ENCODE measurements at regions of chr22 and their contacts with region 1.

Region 1: GRCh38 chr22:36156515-36157419 is 3.8 kb downstream of the APOL3 start:
- DNase-seq: peak; percentile 71 to 96
- H3K4me3 ChIP-seq: peak overlapping the region; percentile 50 to 63
- H3K27ac ChIP-seq: peak overlapping the region; percentile 94
- H3K4me1 ChIP-seq: peaks cover 12 to 61% of the 10 kb centered on the region in 2 donors
- H3K27me3 ChIP-seq: no peaks in the 10 kb centered on the region
- CTCF ChIP-seq: no peak

Region 2: GRCh38 chr22:36239401-36240171 is 82.8 kb after region 1 on chr22 and contains the start of gene APOL2:
- intact Hi-C with region 1: loop called (anchors 2 kb)
- DNase-seq: peak; percentile 80 to 96
- H3K4me3 ChIP-seq: peak within 1 kb of the TSS; percentile 70 to 81
- H3K27ac ChIP-seq: peak within 1 kb of the TSS; percentile 86 to 90
- H3K4me1 ChIP-seq: peaks cover 10 to 36% of the 10 kb centered on the region in 2 donors
- H3K27me3 ChIP-seq: no peaks in the 10 kb centered on the region
- CTCF ChIP-seq: peak; percentile 50 to 79 (median 71)
- total RNA-seq, gene APOL2: 34.3 TPM

Region 3: DNA sequence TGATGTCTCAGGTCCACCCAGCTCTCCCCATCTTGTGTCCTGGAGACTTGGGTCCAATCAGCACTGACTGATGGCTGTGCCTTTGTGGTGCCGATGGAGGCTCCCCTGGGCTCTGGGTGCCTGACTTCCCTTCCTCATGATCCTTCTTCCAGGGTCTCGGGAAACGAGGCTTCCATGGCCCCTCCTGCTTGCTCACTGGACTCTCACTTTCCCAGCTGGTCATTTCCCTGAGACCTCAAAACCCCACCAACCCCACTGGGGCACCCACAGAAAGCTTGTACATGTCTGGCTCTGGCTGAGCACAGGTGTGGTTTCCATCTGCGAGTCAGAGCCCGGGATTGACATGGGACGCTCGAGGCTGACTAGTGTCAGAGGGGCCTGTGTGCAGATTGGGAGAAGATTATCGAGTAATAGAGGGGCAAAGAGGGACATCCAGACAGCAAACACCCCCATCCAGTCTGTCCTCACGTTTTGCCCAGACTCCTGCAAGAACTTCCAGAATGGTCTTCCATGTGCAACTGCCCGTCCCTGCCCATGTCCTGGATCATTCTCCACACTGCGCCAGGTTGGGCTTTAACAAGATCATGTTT is 111.2 kb after region 1 on chr22:
- intact Hi-C with region 1: no loop called
- DNase-seq: peak in 1 of 2 donors; percentile 56
- H3K4me3 ChIP-seq: no peak overlapping the region
- H3K27ac ChIP-seq: no peak overlapping the region
- H3K4me1 ChIP-seq: no peaks in the 10 kb centered on the region
- H3K27me3 ChIP-seq: no peaks in the 10 kb centered on the region
- CTCF ChIP-seq: no peak

Region 4: GRCh38 chr22:36481393-36482168 is 324.8 kb after region 1 on chr22 and contains the start of gene TXN2:
- intact Hi-C with region 1: loop called (anchors 10 kb)
- DNase-seq: peak; percentile 85 to 98
- H3K4me3 ChIP-seq: peak within 1 kb of the TSS; percentile 58 to 77
- H3K27ac ChIP-seq: peak within 1 kb of the TSS; percentile 92 to 99
- H3K4me1 ChIP-seq: peaks cover 8 to 10% of the 10 kb centered on the region in 2 donors
- H3K27me3 ChIP-seq: no peaks in the 10 kb centered on the region
- CTCF ChIP-seq: no peak
- total RNA-seq, gene TXN2: 16.2 TPM

Measured in ascending aorta (tissue), 2 donors.